GM10248 (cell line): ENCODE measurements at regions of chrX and their contacts with region 1.

Region 1: DNA sequence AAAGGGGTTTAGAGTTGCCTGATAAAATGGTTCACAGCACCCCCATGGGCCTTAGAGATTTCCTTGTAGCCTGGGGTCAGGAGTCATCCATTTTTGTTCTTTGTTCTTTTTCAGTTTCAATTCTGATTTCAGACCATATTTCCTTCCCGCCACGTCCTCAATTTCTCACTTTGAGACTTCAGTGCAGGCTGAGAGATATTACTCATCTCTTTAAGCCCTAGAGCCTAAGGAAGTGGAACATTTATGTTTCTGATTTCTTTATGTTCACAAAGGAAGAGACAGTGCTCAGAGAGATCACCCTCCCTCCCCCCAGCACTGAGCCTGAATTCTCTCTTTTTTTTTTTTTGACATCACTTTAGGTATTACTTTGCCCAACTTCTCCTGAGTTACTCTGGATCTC is 56.3 kb downstream of the MSN start:
- DNase-seq: peak; percentile 25
- CTCF ChIP-seq: no peak

Region 2: GRCh38 chrX:65706041-65706828 is 17.5 kb before region 1 on chrX:
- CTCF ChIA-PET with region 1: interaction called, 26 read pairs
- POLR2A ChIA-PET with region 1: interaction called, 8 read pairs
- DNase-seq: peak; percentile 30
- CTCF ChIP-seq: no peak

Region 3: GRCh38 chrX:65769564-65770292 is 46.0 kb after region 1 on chrX:
- CTCF ChIA-PET with region 1: no interaction called
- POLR2A ChIA-PET with region 1: no interaction called
- DNase-seq: no peak
- CTCF ChIP-seq: no peak